Mammary epithelial cell (primary cell): ENCODE measurements at regions of chr9 and their contacts with region 1.

Region 1: DNA sequence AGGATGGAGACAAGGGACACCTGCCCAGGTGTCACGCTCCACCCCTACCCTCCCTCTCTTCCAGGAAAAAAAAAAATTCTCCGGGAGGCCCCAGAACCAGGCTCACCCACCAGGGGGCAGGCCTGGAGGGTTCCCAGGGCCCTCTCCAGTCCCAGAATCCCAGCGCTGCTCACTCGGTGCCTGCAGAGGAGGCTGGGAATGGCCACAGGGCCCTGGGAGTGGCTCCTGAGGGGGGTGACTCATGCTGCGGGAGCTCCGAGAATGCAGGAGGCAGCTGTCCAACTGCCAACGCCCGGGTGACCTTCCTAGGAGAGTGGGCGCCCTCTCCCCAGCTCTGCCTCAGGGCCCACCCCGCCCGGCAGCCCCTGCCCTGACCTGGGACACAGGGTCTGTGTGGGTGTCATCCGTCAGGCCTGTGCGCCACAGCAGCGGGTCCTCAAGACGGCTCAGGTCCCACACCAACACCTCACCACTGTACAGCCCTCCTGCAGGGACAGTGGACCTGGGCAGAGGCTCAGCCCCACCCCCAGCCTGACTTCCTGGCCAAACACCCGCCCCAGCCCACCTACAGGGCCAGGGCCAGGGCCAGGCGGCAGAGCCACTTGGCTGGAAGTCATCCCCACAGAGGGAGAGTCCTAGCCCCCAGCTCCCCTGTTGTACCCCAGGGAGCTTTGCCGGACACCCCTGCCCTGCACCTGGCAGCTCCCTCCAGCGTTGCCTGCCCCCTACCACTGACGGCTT is 21.2 kb downstream of the DYNC2I2 start:
- DNase-seq: peak; percentile 95
- H3K4me3 ChIP-seq: peak overlapping the region in 2 of 3 experiments; percentile 21 to 27
- H3K27ac ChIP-seq: peak overlapping the region; percentile 71
- H3K4me1 ChIP-seq: peaks cover 28% of the 10 kb centered on the region
- H3K27me3 ChIP-seq: no peaks in the 10 kb centered on the region
- CTCF ChIP-seq: peak; percentile 77 to 85

Region 2: DNA sequence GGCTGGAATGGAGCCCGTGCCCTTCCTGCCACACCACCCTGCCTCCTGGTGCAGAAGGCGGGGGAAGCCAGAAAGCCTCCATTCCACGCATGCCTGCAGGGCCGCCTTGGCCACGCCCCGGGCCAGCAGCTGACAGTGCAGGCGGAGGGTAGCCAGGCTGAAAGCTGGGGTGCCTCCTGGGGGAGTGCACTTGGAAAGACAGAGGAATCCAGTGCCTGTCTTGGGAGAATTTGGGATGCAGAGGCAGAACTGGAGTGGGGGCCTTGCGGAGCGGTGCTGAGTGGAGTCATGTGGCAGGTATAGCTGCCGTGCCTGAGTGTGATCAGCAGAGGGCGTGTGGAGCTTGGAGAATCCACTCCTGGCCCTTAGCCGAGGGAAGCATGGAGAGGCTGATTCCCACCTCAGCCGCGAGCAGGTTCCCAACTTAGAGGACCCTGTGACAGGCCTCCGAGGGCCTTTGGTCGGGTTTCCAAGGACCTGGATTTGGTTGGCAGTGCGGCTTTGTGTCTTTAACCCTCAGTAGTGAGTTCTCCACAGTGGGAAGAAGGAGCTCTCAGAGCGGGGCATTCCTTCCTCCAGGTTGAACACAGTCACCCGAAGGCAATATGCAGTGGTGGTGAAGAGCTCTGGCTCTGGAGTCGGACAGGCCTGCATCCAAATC is 273.3 kb before region 1 on chr9:
- CTCF ChIA-PET with region 1: interaction called, 4 read pairs
- dilution Hi-C with region 1: no loop called
- in situ Hi-C with region 1: no loop called
- intact Hi-C with region 1: loop called (anchors 1 kb)
- DNase-seq: peak; percentile 72
- H3K4me3 ChIP-seq: peak overlapping the region in 2 of 3 experiments; percentile 26 to 56
- H3K27ac ChIP-seq: no peak overlapping the region
- H3K4me1 ChIP-seq: peaks cover 25% of the 10 kb centered on the region
- H3K27me3 ChIP-seq: no peaks in the 10 kb centered on the region
- CTCF ChIP-seq: peak; percentile 87 to 91

Region 3: GRCh38 chr9:128540634-128541360 is 94.7 kb before region 1 on chr9:
- CTCF ChIA-PET with region 1: interaction called, 11 read pairs
- dilution Hi-C with region 1: no loop called
- in situ Hi-C with region 1: no loop called
- intact Hi-C with region 1: no loop called
- DNase-seq: no peak
- H3K4me3 ChIP-seq: no peak overlapping the region
- H3K27ac ChIP-seq: no peak overlapping the region
- H3K4me1 ChIP-seq: no peaks in the 10 kb centered on the region
- H3K27me3 ChIP-seq: no peaks in the 10 kb centered on the region
- CTCF ChIP-seq: no peak

Region 4: DNA sequence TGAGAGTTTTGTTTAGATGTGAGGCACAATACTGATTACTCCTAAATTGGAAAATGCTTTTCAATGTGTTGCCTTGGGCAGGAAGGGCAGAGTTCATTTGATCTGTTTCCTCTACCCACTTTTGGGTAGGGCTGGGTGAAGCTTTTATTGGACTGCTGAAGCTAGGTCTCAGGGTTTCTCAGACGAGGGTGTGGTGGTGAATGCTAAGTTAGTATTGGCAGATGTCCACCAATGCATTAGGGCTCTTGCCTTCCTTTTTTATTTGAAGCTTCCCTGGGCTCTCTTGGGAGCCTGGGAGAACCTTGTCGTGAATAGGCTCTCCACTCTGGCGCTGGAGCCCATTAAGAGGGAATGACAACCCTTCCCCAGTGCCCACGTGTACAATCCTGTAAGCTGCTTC is 60.0 kb before region 1 on chr9:
- CTCF ChIA-PET with region 1: no interaction called
- dilution Hi-C with region 1: no loop called
- in situ Hi-C with region 1: no loop called
- intact Hi-C with region 1: no loop called
- DNase-seq: no peak
- H3K4me3 ChIP-seq: no peak overlapping the region
- H3K27ac ChIP-seq: no peak overlapping the region
- H3K4me1 ChIP-seq: no peaks in the 10 kb centered on the region
- H3K27me3 ChIP-seq: no peaks in the 10 kb centered on the region
- CTCF ChIP-seq: no peak

Region 5: GRCh38 chr9:128587453-128587852 is 48.0 kb before region 1 on chr9:
- CTCF ChIA-PET with region 1: no interaction called
- dilution Hi-C with region 1: no loop called
- in situ Hi-C with region 1: no loop called
- intact Hi-C with region 1: no loop called
- DNase-seq: no peak
- H3K4me3 ChIP-seq: no peak overlapping the region
- H3K27ac ChIP-seq: no peak overlapping the region
- H3K4me1 ChIP-seq: no peaks in the 10 kb centered on the region
- H3K27me3 ChIP-seq: no peaks in the 10 kb centered on the region
- CTCF ChIP-seq: no peak

Region 6: DNA sequence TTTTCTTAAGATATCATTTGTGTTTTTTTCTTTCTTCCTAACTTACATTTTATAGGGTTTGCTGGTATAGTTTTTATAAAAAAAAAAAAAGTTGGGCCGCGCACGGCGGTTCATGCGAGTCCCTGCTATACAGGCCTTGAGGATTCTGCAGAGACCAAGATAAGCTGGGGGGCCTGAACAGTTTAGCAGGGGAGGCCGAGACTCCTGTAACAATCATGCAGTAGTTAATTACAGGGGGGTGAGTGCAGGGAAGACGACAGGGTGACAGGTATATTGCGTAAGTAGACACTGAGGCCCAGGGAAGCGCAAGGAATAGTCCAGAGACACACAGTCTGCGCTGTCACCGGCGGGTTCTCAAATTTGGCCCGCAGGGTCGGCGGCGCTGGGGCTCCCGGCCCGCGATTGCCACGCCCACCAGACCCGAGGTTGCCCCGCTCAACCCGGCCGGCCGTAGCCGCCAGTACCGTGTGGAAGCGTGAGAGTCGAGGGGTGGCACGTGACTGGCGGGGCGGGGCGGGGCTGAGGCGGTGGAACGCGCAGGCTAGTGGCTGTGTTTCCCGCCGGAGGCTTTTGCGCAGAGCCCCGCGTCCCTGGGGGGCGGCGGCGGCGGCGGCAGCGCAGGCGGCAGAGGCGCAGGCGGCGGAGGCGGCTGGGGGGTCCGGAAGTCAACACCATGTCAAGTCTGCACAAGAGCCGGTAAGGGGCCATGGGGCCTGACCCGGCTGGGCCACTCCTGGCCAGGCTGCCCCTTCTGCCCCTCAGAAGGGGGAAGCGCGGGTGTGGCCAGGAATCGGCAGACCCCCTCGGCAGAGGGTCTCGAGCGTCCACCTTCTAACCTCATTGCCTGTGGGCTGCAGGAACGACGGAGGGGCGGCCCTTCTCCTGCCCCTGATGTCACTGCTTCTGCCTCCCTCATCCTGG is 151.5 kb after region 1 on chr9 and contains the start of gene TBC1D13:
- CTCF ChIA-PET with region 1: no interaction called
- dilution Hi-C with region 1: no loop called
- in situ Hi-C with region 1: no loop called
- intact Hi-C with region 1: loop called (anchors 10 kb)
- DNase-seq: peak; percentile 77
- H3K4me3 ChIP-seq: peak within 1 kb of the TSS; percentile 78 to 100 (median 96)
- H3K27ac ChIP-seq: peak within 1 kb of the TSS; percentile 11
- H3K4me1 ChIP-seq: peaks cover 6% of the 10 kb centered on the region
- H3K27me3 ChIP-seq: no peaks in the 10 kb centered on the region
- CTCF ChIP-seq: no peak
- total RNA-seq, gene TBC1D13: 18.0 to 18.5 TPM

Region 7: GRCh38 chr9:128845155-128845931 is 209.9 kb after region 1 on chr9:
- CTCF ChIA-PET with region 1: no interaction called
- dilution Hi-C with region 1: no loop called
- in situ Hi-C with region 1: no loop called
- intact Hi-C with region 1: loop called (anchors 1 kb)
- DNase-seq: peak; percentile 75
- H3K4me3 ChIP-seq: peak overlapping the region in 1 of 3 experiments; percentile 21
- H3K27ac ChIP-seq: no peak overlapping the region
- H3K4me1 ChIP-seq: peaks cover 18% of the 10 kb centered on the region
- H3K27me3 ChIP-seq: no peaks in the 10 kb centered on the region
- CTCF ChIP-seq: peak; percentile 44 to 70